Adrenal gland (tissue), 19 donors: ENCODE measurements at regions of chr12 and their contacts with region 1.

Region 1: GRCh38 chr12:2034633-2035430 is 18.0 kb upstream of the CACNA1C start:
- DNase-seq: peak; percentile 80 to 92 (median 91)
- H3K4me3 ChIP-seq: peak overlapping the region in 2 of 4 donors; percentile 2 to 46
- H3K27ac ChIP-seq: no peak overlapping the region
- H3K4me1 ChIP-seq: peaks cover 0 to 5% of the 10 kb centered on the region in 2 donors
- H3K27me3 ChIP-seq: no peaks in the 10 kb centered on the region
- CTCF ChIP-seq: peak; percentile 43 to 98 (median 84)
- POLR2A ChIP-seq: no peak

Region 2: GRCh38 chr12:1634590-1635191 is 400.1 kb before region 1 on chr12:
- intact Hi-C with region 1: loop called in 1 of 2 experiments (anchors 10 kb)
- DNase-seq: peak; percentile 75 to 90 (median 85)
- H3K4me3 ChIP-seq: no peak overlapping the region
- H3K27ac ChIP-seq: no peak overlapping the region
- H3K4me1 ChIP-seq: peaks cover 0 to 8% of the 10 kb centered on the region in 2 donors
- H3K27me3 ChIP-seq: no peaks in the 10 kb centered on the region
- CTCF ChIP-seq: peak; percentile 67 to 81 (median 74)
- POLR2A ChIP-seq: no peak

Region 3: DNA sequence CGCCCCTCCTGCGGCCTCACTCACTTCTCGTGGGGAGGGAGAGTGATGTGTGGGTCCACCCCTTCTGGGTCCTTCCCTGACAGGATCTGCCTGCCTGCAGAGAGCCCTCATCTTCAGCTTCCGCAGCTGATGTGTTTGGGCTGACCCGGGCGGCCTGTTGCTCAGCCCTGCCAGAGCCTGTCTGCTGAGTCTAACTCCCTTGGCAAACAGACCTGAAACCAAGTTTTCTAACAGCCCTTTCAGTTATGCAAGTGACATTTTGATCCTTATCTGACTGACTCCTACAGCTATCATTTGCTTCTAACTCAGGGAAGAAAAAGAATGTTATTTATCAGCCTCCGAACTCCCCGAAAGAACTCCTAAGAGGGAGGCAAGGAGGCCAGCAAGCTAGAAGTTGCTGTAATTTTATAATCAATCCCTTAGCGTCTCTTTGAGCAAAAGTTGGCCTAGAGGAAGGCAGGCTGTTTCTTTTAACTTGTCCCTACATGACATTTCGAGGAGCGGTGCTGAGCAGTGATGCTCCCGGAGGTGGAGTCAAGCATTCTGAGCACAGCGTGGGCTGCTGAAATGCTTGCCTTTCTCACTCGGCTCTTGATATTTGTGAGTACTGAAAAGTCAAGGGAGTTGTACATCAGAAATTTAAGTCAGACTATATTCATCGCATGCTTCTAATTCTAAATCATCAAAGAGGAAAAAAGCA is 84.9 kb before region 1 on chr12:
- intact Hi-C with region 1: loop called in 1 of 2 experiments (anchors 5 kb)
- DNase-seq: peak in 6 of 7 donors; percentile 60 to 76 (median 74)
- H3K4me3 ChIP-seq: no peak overlapping the region
- H3K27ac ChIP-seq: peak overlapping the region; percentile 37 to 85 (median 75)
- H3K4me1 ChIP-seq: peaks cover 28 to 29% of the 10 kb centered on the region in 2 donors
- H3K27me3 ChIP-seq: no peaks in the 10 kb centered on the region
- CTCF ChIP-seq: no peak
- POLR2A ChIP-seq: no peak

Region 4: GRCh38 chr12:2535583-2536204 is 500.9 kb after region 1 on chr12:
- intact Hi-C with region 1: no loop called
- DNase-seq: no peak
- H3K4me3 ChIP-seq: no peak overlapping the region
- H3K27ac ChIP-seq: no peak overlapping the region
- H3K4me1 ChIP-seq: no peaks in the 10 kb centered on the region
- H3K27me3 ChIP-seq: no peaks in the 10 kb centered on the region
- CTCF ChIP-seq: no peak
- POLR2A ChIP-seq: no peak